Upper lobe of right lung (tissue), 1 donor: ENCODE measurements at regions of chr6 and their contacts with region 1.

Region 1: DNA sequence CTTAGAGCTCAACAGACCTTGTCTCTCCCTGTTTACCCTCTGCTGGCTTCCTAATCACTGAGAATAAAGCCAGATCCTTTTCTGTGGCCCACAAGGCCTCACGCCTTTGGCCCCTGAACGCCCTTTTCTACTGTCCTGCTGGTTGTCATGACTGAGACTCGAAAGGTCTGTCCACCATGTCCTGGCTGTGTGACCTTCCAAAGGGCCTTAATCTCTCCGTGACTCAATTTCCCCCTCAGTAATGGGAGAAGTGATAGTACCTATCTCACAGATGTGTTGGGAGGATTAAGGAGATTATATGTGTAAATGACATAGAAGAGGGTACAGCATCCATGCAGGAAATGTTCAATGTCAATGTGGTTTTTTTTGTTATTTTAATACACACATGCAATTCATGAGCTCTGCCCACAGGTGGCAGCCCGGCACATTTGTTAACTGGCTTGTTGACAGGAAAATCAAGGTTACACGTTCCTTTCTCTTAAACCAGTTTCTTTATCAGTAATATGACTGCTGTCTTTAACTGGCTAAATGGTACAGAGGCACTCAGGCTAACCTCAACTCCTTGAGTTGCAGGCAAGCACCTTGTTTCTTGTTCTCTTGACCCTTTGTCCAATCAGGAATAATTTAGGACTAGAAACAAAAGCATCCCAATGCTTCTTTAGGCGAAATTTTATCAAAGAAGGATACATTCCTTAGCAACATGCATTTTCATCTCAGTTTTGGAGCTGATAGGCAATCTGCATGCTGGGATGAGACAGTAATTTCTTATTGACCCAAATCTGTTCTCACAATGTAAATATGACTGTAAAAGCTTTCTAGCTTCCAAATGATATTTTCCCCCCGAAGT is 16.6 kb downstream of the SLC22A1 start:
- DNase-seq: peak; percentile 64
- ATAC-seq: peak; percentile 64
- H3K4me3 ChIP-seq: no peak overlapping the region
- H3K27ac ChIP-seq: no peak overlapping the region
- H3K4me1 ChIP-seq: no peaks in the 10 kb centered on the region
- H3K27me3 ChIP-seq: no peaks in the 10 kb centered on the region
- CTCF ChIP-seq: peak; percentile 72

Region 2: DNA sequence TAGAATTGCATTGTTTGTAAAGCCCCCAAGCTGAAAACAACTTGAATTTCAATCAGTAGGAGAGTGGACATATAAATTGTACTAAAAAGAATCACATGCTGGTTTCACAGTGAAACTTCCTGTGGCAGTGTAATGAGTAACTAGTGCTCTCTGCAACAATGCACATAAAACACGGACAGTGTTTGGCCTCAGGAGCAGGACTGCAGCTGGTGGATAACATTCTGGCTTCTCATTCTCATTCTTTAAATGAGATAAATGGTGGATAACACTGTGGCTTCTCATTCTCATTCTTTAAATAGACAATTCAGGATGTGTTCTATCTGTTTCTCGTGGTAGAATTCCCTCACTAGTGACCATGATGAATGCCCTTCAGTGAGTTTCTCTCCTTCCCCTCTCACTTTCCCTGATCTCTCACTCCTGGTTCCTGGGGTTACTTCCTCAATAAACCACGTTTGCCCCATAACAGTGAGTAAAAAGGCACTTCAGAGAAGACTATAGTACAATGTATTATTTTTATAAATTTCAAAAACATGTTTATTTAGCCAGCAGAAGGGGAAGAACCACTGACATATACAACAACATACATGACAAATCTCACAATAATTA is 60.5 kb after region 1 on chr6:
- intact Hi-C with region 1: no loop called
- DNase-seq: no peak
- ATAC-seq: no peak
- H3K4me3 ChIP-seq: no peak overlapping the region
- H3K27ac ChIP-seq: no peak overlapping the region
- H3K4me1 ChIP-seq: no peaks in the 10 kb centered on the region
- H3K27me3 ChIP-seq: no peaks in the 10 kb centered on the region
- CTCF ChIP-seq: no peak

Region 3: DNA sequence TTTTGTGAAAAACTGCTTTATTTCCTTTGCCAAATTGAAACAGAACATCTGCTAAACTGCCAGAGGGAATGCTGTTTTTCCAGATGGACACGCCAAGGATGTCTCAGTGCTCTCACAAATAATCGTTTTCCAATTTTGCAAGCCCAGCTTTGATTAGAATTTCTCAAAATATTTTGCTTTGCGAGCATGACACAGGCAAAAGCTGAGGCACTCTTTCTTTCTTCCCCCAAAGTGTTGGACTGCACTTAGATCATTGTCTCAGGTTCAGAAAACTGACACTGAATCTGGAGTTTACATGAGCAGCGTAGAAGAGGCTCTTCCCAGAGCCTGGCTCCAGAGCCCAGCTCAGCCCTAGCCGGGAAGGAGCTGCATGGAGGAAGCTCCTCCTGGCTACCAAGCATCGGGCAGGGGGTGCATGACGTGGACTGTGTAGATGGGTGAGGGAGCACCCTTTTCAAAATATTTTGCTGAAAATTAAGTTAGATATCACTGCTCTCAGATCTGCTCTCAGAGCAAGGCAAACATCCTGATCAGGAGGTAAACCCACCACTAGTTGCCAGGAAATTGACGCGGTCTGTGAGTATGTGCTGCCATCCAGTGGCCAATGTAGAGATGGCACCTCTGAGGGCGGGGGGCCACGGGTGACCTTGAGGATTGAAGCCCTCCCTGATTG is 317.5 kb after region 1 on chr6:
- intact Hi-C with region 1: loop called (anchors 10 kb)
- DNase-seq: peak; percentile 72
- ATAC-seq: peak; percentile 93
- H3K4me3 ChIP-seq: no peak overlapping the region
- H3K27ac ChIP-seq: no peak overlapping the region
- H3K4me1 ChIP-seq: peaks cover 4% of the 10 kb centered on the region
- H3K27me3 ChIP-seq: peaks cover 5% of the 10 kb centered on the region
- CTCF ChIP-seq: peak; percentile 96